CD8-positive, alpha-beta memory T cell (primary cell): ENCODE measurements at regions of chr19 and their contacts with region 1.

Region 1: DNA sequence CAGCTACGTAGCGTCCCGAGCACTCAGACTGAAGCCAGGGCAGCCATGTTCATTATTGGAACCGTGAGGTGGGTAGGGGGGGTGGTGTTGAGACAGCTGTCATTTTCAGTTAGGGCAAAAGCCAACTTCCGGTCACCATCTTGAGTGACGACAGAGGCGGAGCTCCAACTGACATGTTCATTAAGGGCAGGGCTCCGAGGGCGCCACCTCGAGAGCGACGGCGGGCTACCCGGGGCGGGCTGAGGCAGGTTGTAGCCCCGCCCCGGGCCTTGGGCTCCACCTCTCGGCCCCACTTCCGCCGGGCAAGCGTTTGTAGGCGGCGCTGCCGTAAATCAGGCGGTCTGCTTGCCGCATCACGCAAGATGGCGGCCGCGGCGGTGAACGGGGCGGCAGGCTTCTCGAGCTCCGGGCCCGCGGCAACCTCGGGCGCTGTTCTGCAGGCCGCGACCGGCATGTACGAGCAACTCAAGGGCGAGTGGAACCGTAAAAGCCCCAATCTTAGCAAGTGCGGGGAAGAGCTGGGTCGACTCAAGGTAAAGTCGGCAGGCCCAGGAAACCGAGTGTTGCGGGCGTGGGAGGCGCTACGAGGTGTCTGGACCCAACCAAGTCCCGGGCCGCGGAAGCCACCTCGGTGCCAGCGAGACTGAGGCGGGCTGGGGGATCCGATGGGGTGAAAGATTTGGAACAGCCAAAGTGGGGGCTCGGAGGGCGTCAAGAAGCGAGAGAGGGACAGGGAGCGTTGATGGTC is at the start of gene PSMD8:
- DNase-seq: peak; percentile 97 to 99 (median 99)
- H3K4me3 ChIP-seq: peak within 1 kb of the TSS; percentile 89
- H3K4me3 Mint-ChIP-seq: peak within 1 kb of the TSS; percentile 97 to 100 (median 98)
- H3K27ac ChIP-seq: peak within 1 kb of the TSS; percentile 91
- H3K27ac Mint-ChIP-seq: peak within 1 kb of the TSS; percentile 93 to 99 (median 98)
- H3K4me1 ChIP-seq: peaks cover 21% of the 10 kb centered on the region
- H3K4me1 Mint-ChIP-seq: peaks cover 29 to 33% (median 31%) of the 10 kb centered on the region in 3 donors
- H3K27me3 ChIP-seq: no peaks in the 10 kb centered on the region
- H3K27me3 Mint-ChIP-seq: peaks cover 6 to 10% of the 10 kb centered on the region in 2 donors
- total RNA-seq, gene PSMD8: 256 to 267 TPM

Region 2: GRCh38 chr19:38107129-38107528 is 267.5 kb before region 1 on chr19:
- CTCF ChIA-PET with region 1: no interaction called
- POLR2A ChIA-PET with region 1: no interaction called
- DNase-seq: no peak
- H3K4me3 ChIP-seq: no peak overlapping the region
- H3K4me3 Mint-ChIP-seq: no peak overlapping the region
- H3K27ac ChIP-seq: no peak overlapping the region
- H3K27ac Mint-ChIP-seq: no peak overlapping the region
- H3K4me1 ChIP-seq: no peaks in the 10 kb centered on the region
- H3K4me1 Mint-ChIP-seq: no peaks in the 10 kb centered on the region
- H3K27me3 ChIP-seq: no peaks in the 10 kb centered on the region
- H3K27me3 Mint-ChIP-seq: no peaks in the 10 kb centered on the region

Region 3: DNA sequence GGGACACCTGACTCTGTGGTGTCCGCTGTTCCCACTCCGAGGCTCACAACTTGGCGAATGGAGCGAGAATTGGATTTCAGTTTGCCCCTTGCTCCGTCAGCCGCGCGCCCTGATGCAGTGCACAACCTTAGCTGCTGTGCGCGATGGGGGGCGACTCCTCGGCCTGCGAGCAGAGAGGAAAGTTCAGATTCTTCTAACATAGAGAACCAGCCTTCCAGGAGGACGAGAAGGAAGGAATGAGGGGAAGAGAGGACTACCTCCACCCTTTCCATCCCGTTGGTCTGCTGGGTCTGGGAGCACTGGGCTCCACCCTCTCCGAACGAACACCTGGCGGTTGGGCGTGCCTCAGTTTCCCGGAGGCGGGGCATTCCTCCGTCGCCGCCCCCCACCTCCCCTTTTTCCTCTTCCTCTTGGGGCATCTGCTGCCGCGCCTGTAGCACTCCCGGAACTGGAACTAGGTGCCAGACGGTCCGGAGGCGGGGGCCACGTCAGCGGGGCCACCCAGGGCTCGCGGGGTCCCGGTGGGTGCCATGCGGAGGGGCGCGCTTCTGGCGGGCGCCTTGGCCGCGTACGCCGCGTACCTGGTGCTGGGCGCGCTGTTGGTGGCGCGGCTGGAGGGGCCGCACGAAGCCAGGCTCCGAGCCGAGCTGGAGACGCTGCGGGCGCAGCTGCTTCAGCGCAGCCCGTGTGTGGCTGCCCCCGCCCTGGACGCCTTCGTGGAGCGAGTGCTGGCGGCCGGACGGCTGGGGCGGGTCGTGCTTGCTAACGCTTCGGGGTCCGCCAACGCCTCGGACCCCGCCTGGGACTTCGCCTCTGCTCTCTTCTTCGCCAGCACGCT is 55.0 kb before region 1 on chr19 and contains the start of gene KCNK6:
- CTCF ChIA-PET with region 1: interaction called, 11 read pairs
- POLR2A ChIA-PET with region 1: interaction called, 4 read pairs
- DNase-seq: peak; percentile 38 to 63 (median 41)
- H3K4me3 ChIP-seq: peak within 1 kb of the TSS; percentile 83
- H3K4me3 Mint-ChIP-seq: peak within 1 kb of the TSS; percentile 84 to 92 (median 85)
- H3K27ac ChIP-seq: peak within 1 kb of the TSS; percentile 24
- H3K27ac Mint-ChIP-seq: peak within 1 kb of the TSS; percentile 48 to 94 (median 80)
- H3K4me1 ChIP-seq: peaks cover 48% of the 10 kb centered on the region
- H3K4me1 Mint-ChIP-seq: peaks cover 45 to 66% (median 53%) of the 10 kb centered on the region in 3 donors
- H3K27me3 ChIP-seq: no peaks in the 10 kb centered on the region
- H3K27me3 Mint-ChIP-seq: no peaks in the 10 kb centered on the region
- total RNA-seq, gene KCNK6: 10.1 to 11.1 TPM

Region 4: GRCh38 chr19:38387550-38388348 is 13.1 kb after region 1 on chr19 and contains the start of gene GGN:
- CTCF ChIA-PET with region 1: interaction called, 15 read pairs
- POLR2A ChIA-PET with region 1: interaction called, 9 read pairs
- DNase-seq: peak; percentile 68 to 83 (median 71)
- H3K4me3 ChIP-seq: peak within 1 kb of the TSS; percentile 78
- H3K4me3 Mint-ChIP-seq: peak within 1 kb of the TSS; percentile 82 to 95 (median 91)
- H3K27ac ChIP-seq: peak within 1 kb of the TSS; percentile 31
- H3K27ac Mint-ChIP-seq: peak within 1 kb of the TSS; percentile 61 to 97 (median 88)
- H3K4me1 ChIP-seq: peaks cover 24% of the 10 kb centered on the region
- H3K4me1 Mint-ChIP-seq: peaks cover 17 to 28% (median 19%) of the 10 kb centered on the region in 3 donors
- H3K27me3 ChIP-seq: no peaks in the 10 kb centered on the region
- H3K27me3 Mint-ChIP-seq: peaks cover 4 to 9% of the 10 kb centered on the region in 2 donors
- total RNA-seq, gene GGN: 0.15 TPM in 1 of 2 experiments, not detected in the other

Region 5: GRCh38 chr19:38433268-38433733 is 58.7 kb after region 1 on chr19 and contains the start of gene RYR1:
- CTCF ChIA-PET with region 1: no interaction called
- POLR2A ChIA-PET with region 1: no interaction called
- DNase-seq: no peak
- H3K4me3 ChIP-seq: no peak within 1 kb of the TSS
- H3K4me3 Mint-ChIP-seq: peak within 1 kb of the TSS in 6 of 7 donors; percentile 6 to 65 (median 25)
- H3K27ac ChIP-seq: no peak within 1 kb of the TSS
- H3K27ac Mint-ChIP-seq: no peak within 1 kb of the TSS
- H3K4me1 ChIP-seq: no peaks in the 10 kb centered on the region
- H3K4me1 Mint-ChIP-seq: peaks cover 8 to 17% (median 11%) of the 10 kb centered on the region in 3 donors
- H3K27me3 ChIP-seq: no peaks in the 10 kb centered on the region
- H3K27me3 Mint-ChIP-seq: peaks cover 30 to 41% of the 10 kb centered on the region in 2 donors
- total RNA-seq, gene RYR1: 1.4 to 3.3 TPM

Region 6: DNA sequence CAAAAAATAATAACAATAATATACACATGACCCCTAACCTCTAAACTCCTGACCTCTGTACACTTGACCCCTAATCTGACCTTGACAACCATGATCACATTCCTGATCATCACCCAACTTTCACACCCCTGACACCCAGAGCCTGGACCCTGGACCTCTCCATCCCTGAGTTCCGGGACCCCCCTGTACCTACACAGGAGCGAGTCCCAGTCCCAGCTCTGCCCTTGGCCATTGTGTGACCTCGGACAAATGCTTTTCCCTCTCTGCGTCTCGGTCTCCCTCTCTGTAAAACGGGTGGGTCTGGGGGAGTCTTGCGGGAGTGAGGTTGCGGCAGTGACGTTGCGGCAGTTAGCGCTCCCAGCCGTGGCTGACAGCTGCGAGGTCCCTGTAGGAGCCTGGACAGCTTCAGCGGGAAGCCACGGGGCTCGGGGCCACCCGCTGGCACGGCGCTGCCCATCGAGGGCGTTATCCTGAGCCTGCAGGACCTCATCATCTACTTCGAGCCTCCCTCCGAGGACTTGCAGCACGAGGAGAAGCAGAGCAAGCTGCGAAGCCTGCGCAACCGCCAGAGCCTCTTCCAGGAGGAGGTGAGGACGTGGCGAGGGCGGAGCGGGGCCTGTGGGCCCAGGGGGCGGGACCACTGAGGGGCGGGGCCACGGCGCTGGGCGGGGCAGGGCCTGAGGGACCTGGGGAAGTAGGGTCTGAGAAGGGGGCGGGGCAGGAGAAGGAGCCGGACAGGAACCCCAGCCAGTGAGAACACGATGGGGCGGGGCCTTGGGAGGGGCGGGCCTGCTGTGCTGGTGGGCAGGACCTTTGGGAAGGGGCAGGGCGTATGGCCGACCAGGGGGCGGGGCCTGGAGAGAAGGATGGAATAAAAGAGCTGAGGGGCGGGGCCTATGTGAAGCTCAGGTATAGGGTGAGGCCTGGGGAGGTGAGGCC is 78.1 kb after region 1 on chr19:
- CTCF ChIA-PET with region 1: no interaction called
- POLR2A ChIA-PET with region 1: no interaction called
- DNase-seq: no peak
- H3K4me3 ChIP-seq: no peak overlapping the region
- H3K4me3 Mint-ChIP-seq: no peak overlapping the region
- H3K27ac ChIP-seq: peak overlapping the region; percentile 57
- H3K27ac Mint-ChIP-seq: no peak overlapping the region
- H3K4me1 ChIP-seq: no peaks in the 10 kb centered on the region
- H3K4me1 Mint-ChIP-seq: no peaks in the 10 kb centered on the region
- H3K27me3 ChIP-seq: no peaks in the 10 kb centered on the region
- H3K27me3 Mint-ChIP-seq: peaks cover 3 to 9% of the 10 kb centered on the region in 2 donors

Region 7: GRCh38 chr19:38862321-38863059 is 487.9 kb after region 1 on chr19:
- CTCF ChIA-PET with region 1: no interaction called
- POLR2A ChIA-PET with region 1: interaction called, 10 read pairs
- DNase-seq: no peak
- H3K4me3 ChIP-seq: no peak overlapping the region
- H3K4me3 Mint-ChIP-seq: peak overlapping the region in 2 of 7 donors; percentile 24 to 34
- H3K27ac ChIP-seq: peak overlapping the region; percentile 2
- H3K27ac Mint-ChIP-seq: peak overlapping the region in 5 of 8 donors; percentile 10 to 94 (median 32)
- H3K4me1 ChIP-seq: peaks cover 24% of the 10 kb centered on the region
- H3K4me1 Mint-ChIP-seq: peaks cover 33 to 43% (median 38%) of the 10 kb centered on the region in 3 donors
- H3K27me3 ChIP-seq: no peaks in the 10 kb centered on the region
- H3K27me3 Mint-ChIP-seq: no peaks in the 10 kb centered on the region